ENCODE measurements at regions of chr1 and their contacts with region 1.

Region 1: GRCh38 chr1:184982002-184982954 is 8.0 kb upstream of the NIBAN1 start:
- DNase-seq: peak; percentile 73

Region 2: DNA sequence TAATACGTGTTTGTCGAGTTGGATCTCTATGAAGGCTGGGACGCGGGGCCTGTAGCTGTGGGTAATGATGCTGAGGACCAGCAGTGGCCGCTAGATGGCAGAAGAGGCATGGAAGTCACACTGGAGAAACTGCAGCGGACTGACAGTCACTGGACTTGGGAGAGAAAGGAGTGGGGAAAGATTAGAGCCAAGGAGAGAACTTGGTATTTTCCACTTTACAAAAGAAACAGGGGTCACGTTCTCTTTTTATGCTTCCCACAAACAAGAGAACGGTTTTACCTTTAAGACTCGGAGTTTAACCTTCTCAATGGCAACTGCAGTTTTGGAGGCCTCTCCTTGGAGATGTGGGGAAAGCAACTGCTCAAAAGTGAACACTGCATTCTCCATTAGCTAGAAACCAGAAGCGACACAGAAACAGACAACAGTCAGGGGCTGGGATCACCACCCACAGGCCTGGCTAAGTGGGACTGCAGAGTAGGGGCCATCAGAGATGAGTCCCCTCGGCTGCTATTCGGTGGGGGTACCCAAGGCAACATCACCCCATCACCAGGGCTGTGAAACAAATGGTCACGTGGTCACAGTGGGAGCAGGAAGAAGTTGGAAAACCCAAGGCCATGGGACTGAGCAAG is 176.5 kb before region 1 on chr1:
- CTCF ChIA-PET with region 1: interaction called, 25 read pairs
- POLR2A ChIA-PET with region 1: interaction called, 3 read pairs
- DNase-seq: peak; percentile 92